HCT116 (cell line): ENCODE measurements at regions of chr4 and their contacts with region 1.

Region 1: DNA sequence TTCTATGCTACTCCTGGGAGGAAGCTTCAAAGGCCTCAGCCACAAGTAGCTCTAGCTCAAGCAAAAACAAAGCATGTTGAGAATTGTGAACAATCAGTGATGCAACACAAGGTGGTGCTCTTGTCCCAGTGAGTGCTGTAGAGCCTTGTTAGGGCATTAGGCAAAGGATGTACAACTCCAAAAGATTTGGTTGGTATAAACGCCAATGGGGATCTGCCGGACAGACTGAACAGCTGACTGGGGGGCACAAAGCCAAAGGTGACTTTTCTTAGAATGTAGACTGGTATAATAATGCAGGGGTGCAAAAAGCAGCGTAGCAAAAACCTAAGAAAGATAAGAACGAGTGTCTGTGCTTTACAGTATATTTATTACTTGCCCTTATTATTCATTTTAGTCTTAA is 62.6 kb upstream of the ALB start:
- DNase-seq: peak; percentile 33
- ATAC-seq: peak; percentile 85
- H3K4me3 ChIP-seq: no peak overlapping the region
- H3K27ac ChIP-seq: no peak overlapping the region
- H3K4me1 ChIP-seq: no peaks in the 10 kb centered on the region
- H3K27me3 ChIP-seq: no peaks in the 10 kb centered on the region
- CTCF ChIP-seq: peak; percentile 52 to 82 (median 65)
- POLR2A ChIP-seq: no peak
- RAD21 ChIP-seq: peak; percentile 84

Region 2: DNA sequence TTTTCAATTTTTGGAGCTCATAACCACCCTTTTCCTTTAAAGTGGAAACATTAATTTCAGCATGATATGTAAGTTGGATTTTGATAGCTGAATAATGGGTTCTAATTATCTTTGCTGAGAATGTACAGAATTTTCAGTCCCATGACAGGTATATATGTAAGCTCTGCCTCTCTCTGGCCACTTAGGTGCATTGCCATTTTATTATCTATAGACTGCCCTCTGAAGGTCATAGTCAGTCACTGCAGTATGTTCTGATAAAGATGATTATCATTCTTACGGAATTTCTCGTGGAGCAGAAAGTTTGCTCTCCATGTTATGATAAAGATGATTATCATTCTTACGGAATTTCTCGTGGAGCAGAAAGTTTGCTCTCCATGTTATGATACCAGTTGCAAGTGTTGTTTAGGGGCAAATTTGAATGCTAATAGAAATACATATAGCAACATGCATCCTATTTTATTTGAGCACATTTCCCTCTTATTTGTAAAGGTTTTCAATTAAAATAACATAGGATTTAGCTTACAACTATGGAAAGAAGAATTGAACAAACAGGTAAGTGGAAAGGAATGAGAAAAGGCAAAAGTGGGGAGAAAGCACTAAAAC is 105.0 kb after region 1 on chr4:
- CTCF ChIA-PET with region 1: interaction called, 62 read pairs
- POLR2A ChIA-PET with region 1: no interaction called
- RAD21 ChIA-PET with region 1: interaction called, 3 to 6 read pairs
- intact Hi-C with region 1: loop called (anchors 1 kb)
- DNase-seq: peak; percentile 48
- ATAC-seq: peak; percentile 97
- H3K4me3 ChIP-seq: no peak overlapping the region
- H3K27ac ChIP-seq: no peak overlapping the region
- H3K4me1 ChIP-seq: no peaks in the 10 kb centered on the region
- H3K27me3 ChIP-seq: no peaks in the 10 kb centered on the region
- CTCF ChIP-seq: peak; percentile 82 to 99 (median 92)
- POLR2A ChIP-seq: no peak
- RAD21 ChIP-seq: peak; percentile 68

Region 3: GRCh38 chr4:73573794-73574406 is 232.4 kb after region 1 on chr4:
- CTCF ChIA-PET with region 1: interaction called, 4 read pairs
- POLR2A ChIA-PET with region 1: interaction called, 4 read pairs
- RAD21 ChIA-PET with region 1: no interaction called
- intact Hi-C with region 1: loop called (anchors 5 kb)
- DNase-seq: peak; percentile 54
- ATAC-seq: peak; percentile 88
- H3K4me3 ChIP-seq: no peak overlapping the region
- H3K27ac ChIP-seq: no peak overlapping the region
- H3K4me1 ChIP-seq: no peaks in the 10 kb centered on the region
- H3K27me3 ChIP-seq: no peaks in the 10 kb centered on the region
- CTCF ChIP-seq: peak; percentile 68 to 91 (median 88); a peak in 5 of 6 replicates
- POLR2A ChIP-seq: no peak
- RAD21 ChIP-seq: peak; percentile 86

Region 4: DNA sequence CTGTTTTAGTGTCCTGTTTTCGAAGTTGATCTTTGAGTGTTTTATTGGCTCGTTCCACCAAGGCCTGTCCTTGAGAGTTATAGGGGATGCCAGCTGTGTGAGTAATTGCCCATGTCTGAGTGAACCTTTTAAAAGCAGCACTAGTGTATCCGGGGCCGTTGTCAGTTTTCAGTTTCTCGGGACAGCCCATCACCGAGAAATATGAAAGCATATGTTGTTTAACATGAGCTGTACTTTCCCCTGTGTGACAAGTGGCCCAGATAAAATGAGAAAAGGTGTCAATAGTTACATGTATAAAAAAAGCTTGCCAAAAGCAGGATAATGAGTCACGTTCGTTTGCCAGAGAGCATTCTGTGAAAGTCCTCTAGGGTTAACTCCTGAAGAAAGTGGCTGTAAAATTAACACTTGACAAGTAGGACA is 327.3 kb after region 1 on chr4:
- CTCF ChIA-PET with region 1: no interaction called
- POLR2A ChIA-PET with region 1: no interaction called
- RAD21 ChIA-PET with region 1: no interaction called
- intact Hi-C with region 1: no loop called
- DNase-seq: no peak
- ATAC-seq: no peak
- H3K4me3 ChIP-seq: no peak overlapping the region
- H3K27ac ChIP-seq: no peak overlapping the region
- H3K4me1 ChIP-seq: no peaks in the 10 kb centered on the region
- H3K27me3 ChIP-seq: no peaks in the 10 kb centered on the region
- CTCF ChIP-seq: no peak
- POLR2A ChIP-seq: no peak
- RAD21 ChIP-seq: no peak

Region 5: DNA sequence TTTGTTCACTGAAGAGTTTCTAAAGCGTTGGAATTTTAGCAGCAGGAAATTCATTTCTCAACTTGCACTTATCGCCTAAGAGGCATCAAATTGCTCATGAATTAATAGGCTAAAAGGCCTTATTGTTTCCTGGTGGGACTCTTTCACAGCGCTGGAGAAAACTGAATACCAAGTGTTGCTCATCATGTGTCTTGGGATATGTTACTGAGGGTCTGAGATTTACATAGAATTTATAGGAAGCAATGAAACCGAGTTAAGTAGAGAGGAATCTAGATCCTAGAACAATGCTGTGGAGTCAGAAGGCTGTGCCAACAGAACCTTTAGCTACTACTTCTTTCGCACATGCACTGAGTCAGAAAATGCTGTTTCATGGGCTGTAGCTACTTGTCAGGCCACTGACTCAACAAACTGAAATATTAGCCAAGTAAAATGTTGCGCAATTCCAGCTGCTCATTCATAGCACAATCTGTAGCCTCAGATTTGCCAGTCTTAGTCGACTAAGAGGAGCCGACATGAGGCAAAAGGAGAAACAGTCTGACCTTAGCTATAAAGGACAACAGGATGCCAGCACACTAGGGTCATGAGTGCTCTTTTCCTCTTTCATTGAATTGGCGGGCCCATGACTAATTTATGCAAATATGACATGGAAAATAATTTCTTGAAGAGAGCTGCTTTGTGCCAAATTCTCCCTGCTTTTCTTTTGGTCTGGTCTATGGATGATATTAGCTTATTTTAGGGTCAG is 363.0 kb after region 1 on chr4:
- CTCF ChIA-PET with region 1: no interaction called
- POLR2A ChIA-PET with region 1: no interaction called
- RAD21 ChIA-PET with region 1: no interaction called
- intact Hi-C with region 1: no loop called
- DNase-seq: peak; percentile 82
- ATAC-seq: peak; percentile 70
- H3K4me3 ChIP-seq: no peak overlapping the region
- H3K27ac ChIP-seq: no peak overlapping the region
- H3K4me1 ChIP-seq: peaks cover 14 to 41% of the 10 kb centered on the region in 2 experiments
- H3K27me3 ChIP-seq: no peaks in the 10 kb centered on the region
- CTCF ChIP-seq: no peak
- POLR2A ChIP-seq: no peak
- RAD21 ChIP-seq: peak; percentile 31; the same call in 1 of the 2 replicates

Region 6: DNA sequence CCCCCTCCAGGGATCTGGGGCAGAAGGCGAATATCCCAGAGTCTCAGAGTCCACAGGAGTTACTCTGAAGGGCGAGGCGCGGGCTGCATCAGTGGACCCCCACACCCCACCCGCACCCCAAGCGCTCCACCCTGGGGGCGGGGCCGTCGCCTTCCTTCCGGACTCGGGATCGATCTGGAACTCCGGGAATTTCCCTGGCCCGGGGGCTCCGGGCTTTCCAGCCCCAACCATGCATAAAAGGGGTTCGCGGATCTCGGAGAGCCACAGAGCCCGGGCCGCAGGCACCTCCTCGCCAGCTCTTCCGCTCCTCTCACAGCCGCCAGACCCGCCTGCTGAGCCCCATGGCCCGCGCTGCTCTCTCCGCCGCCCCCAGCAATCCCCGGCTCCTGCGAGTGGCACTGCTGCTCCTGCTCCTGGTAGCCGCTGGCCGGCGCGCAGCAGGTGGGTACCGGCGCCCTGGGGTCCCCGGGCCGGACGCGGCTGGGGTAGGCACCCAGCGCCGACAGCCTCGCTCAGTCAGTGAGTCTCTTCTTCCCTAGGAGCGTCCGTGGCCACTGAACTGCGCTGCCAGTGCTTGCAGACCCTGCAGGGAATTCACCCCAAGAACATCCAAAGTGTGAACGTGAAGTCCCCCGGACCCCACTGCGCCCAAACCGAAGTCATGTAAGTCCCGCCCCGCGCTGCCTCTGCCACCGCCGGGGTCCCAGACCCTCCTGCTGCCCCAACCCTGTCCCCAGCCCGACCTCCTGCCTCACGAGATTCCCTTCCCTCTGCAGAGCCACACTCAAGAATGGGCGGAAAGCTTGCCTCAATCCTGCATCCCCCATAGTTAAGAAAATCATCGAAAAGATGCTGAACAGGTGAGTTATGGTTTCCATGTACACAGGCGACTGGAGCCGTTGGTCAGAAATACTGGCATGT is 527.9 kb after region 1 on chr4 and contains the start of gene CXCL1:
- CTCF ChIA-PET with region 1: interaction called, 5 read pairs
- POLR2A ChIA-PET with region 1: no interaction called
- RAD21 ChIA-PET with region 1: no interaction called
- intact Hi-C with region 1: loop called (anchors 10 kb)
- DNase-seq: no peak
- ATAC-seq: peak; percentile 70
- H3K4me3 ChIP-seq: peak within 1 kb of the TSS; percentile 62 to 84
- H3K27ac ChIP-seq: peak within 1 kb of the TSS; percentile 48; the same call in 1 of the 2 replicates
- H3K4me1 ChIP-seq: peaks cover 0 to 13% of the 10 kb centered on the region in 2 experiments; a peak in 3 of 4 replicates
- H3K27me3 ChIP-seq: no peaks in the 10 kb centered on the region
- CTCF ChIP-seq: no peak
- POLR2A ChIP-seq: no peak
- RAD21 ChIP-seq: no peak
- total RNA-seq, gene CXCL1: 2.5 TPM